PC-3 (cell line): ENCODE measurements at regions of chr1 and their contacts with region 1.

Region 1: GRCh38 chr1:88061492-88062177 is 622.4 kb upstream of the PKN2 start:
- DNase-seq: peak; percentile 84
- ATAC-seq: peak; percentile 89
- H3K4me3 ChIP-seq: no peak overlapping the region
- H3K27ac ChIP-seq: no peak overlapping the region
- H3K4me1 ChIP-seq: peaks cover 27% of the 10 kb centered on the region
- H3K27me3 ChIP-seq: no peaks in the 10 kb centered on the region
- CTCF ChIP-seq: peak; percentile 95

Region 2: GRCh38 chr1:87508247-87508787 is 553.3 kb before region 1 on chr1:
- CTCF ChIA-PET with region 1: no interaction called
- POLR2A ChIA-PET with region 1: no interaction called
- intact Hi-C with region 1: loop called (anchors 5 kb)
- DNase-seq: no peak
- ATAC-seq: peak; percentile 57
- H3K4me3 ChIP-seq: no peak overlapping the region
- H3K27ac ChIP-seq: no peak overlapping the region
- H3K4me1 ChIP-seq: no peaks in the 10 kb centered on the region; the same call in 1 of the 2 replicates
- H3K27me3 ChIP-seq: no peaks in the 10 kb centered on the region
- CTCF ChIP-seq: no peak

Region 3: DNA sequence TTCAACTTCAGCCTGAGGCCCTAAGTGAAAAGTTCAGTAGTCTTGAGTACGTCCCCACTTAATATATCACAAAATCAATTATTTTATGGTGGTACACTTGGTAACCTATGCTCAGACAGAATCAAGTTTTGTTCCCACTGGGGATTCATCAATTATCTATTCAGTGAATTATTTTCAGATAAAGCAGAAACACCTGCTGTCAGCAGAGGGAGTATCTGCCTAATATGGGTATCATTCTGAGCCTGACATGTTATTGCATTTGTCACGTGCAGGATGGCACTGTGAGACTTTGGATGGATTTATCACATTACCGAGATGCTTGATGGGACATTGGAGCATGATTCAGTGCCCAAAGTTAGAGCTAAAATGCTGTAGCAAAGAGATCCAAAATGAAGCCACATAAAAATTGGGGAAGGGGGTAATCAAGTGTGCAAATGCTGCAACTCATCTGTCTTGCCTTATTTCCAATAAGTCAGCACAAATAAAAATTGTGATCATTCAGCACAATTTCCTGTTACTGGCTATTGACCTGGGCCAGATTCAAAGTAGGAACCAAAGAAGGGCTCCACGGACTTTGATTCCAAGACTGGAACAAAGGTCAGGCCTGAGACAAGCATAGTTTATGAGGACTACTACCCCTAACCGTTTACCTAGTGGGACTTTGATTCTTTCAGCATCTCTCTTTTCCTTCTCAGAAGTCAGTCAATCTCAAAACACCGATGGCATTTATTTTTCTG is 75.3 kb before region 1 on chr1:
- CTCF ChIA-PET with region 1: interaction called, 3 read pairs
- POLR2A ChIA-PET with region 1: no interaction called
- intact Hi-C with region 1: loop called (anchors 1 kb)
- DNase-seq: peak; percentile 39
- ATAC-seq: peak; percentile 53
- H3K4me3 ChIP-seq: no peak overlapping the region
- H3K27ac ChIP-seq: no peak overlapping the region
- H3K4me1 ChIP-seq: peaks cover 12% of the 10 kb centered on the region; the same call in 1 of the 2 replicates
- H3K27me3 ChIP-seq: no peaks in the 10 kb centered on the region
- CTCF ChIP-seq: peak; percentile 56

Region 4: GRCh38 chr1:88043834-88044233 is 17.8 kb before region 1 on chr1:
- CTCF ChIA-PET with region 1: no interaction called
- POLR2A ChIA-PET with region 1: no interaction called
- intact Hi-C with region 1: no loop called
- DNase-seq: no peak
- ATAC-seq: no peak
- H3K4me3 ChIP-seq: no peak overlapping the region
- H3K27ac ChIP-seq: no peak overlapping the region
- H3K4me1 ChIP-seq: no peaks in the 10 kb centered on the region
- H3K27me3 ChIP-seq: no peaks in the 10 kb centered on the region
- CTCF ChIP-seq: no peak

Region 5: GRCh38 chr1:88118176-88118845 is 56.7 kb after region 1 on chr1:
- CTCF ChIA-PET with region 1: no interaction called
- POLR2A ChIA-PET with region 1: no interaction called
- intact Hi-C with region 1: no loop called
- DNase-seq: no peak
- ATAC-seq: no peak
- H3K4me3 ChIP-seq: no peak overlapping the region
- H3K27ac ChIP-seq: no peak overlapping the region
- H3K4me1 ChIP-seq: no peaks in the 10 kb centered on the region
- H3K27me3 ChIP-seq: no peaks in the 10 kb centered on the region
- CTCF ChIP-seq: no peak

Region 6: DNA sequence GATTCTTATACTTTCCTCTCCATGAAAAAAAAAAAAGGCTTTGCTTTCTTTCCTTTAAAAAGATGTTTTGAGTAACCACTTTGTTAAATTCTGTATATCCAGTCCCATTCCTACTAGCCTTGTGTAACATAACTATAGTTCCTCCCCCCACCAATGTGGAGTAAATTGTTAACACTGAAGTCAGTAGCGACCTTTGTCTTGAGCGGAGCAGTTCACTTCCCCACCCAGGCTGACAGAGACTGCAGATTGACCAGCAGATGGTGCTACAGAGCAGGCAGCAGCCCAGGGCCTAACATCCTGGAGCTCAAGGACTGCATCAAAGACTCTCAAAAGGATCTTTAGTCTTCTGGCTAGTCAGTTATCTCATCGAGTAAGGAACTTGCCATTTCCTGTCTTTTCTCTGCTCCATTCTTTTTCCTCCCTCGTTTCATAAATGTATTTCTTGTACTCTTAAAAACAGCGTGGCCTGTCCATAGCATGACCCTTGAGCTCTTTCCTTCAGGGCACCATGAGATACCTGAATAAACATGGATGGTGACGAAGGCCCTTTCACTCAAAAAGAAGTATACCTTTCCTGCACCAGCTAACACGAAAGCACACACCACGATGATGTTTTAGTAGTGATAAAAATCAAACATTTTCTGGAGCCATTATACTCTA is 118.9 kb after region 1 on chr1:
- CTCF ChIA-PET with region 1: no interaction called
- POLR2A ChIA-PET with region 1: no interaction called
- intact Hi-C with region 1: loop called (anchors 5 kb)
- DNase-seq: peak; percentile 85
- ATAC-seq: peak; percentile 98
- H3K4me3 ChIP-seq: no peak overlapping the region
- H3K27ac ChIP-seq: no peak overlapping the region
- H3K4me1 ChIP-seq: peaks cover 6% of the 10 kb centered on the region
- H3K27me3 ChIP-seq: no peaks in the 10 kb centered on the region
- CTCF ChIP-seq: peak; percentile 96

Region 7: DNA sequence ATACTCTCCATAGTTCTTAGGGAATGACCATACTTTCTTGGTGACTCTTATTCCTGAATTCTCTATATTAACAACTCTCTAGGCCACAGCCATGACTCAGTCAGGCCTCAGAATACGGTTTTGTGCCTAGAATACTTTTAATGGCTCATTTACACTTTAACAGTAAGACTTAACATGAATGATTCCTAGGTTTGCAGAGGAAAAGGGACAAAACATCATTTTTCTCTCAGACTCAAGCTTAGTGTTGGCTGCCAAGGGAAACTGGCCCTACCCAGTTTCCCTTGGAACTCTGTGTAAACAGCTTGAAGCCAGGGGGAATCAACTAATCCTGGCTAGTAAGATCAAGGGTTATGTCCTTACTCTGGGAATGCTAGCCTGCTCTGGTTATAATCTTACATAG is 457.5 kb after region 1 on chr1:
- CTCF ChIA-PET with region 1: no interaction called
- POLR2A ChIA-PET with region 1: no interaction called
- intact Hi-C with region 1: no loop called
- DNase-seq: peak; percentile 7
- ATAC-seq: peak; percentile 66
- H3K4me3 ChIP-seq: no peak overlapping the region
- H3K27ac ChIP-seq: no peak overlapping the region
- H3K4me1 ChIP-seq: no peaks in the 10 kb centered on the region
- H3K27me3 ChIP-seq: 0 out of 2 replicates have a peak, but pooled peaks cover 2% of the 10 kb centered on the region
- CTCF ChIP-seq: no peak

Region 8: DNA sequence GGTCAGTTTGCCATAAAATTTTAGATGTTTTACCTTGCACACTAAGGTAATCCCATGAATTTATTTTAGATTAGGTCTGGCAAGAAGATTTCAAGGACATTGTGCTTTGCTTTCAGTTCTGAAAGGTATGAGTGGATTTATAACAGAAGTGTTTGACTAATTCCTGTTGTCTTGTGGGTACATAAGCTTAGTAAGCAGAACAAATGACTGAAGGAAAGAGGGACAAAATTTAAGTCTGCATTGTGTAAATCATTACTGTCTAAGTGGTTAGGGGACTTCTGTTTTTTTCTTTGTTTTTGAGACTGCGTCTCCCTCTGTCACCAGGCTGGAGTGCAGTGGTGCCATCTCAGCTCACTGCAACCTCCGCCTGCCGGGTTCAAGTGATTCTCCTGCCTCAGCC is 682.5 kb after region 1 on chr1:
- CTCF ChIA-PET with region 1: no interaction called
- POLR2A ChIA-PET with region 1: no interaction called
- intact Hi-C with region 1: no loop called
- DNase-seq: no peak
- ATAC-seq: no peak
- H3K4me3 ChIP-seq: no peak overlapping the region
- H3K27ac ChIP-seq: no peak overlapping the region
- H3K4me1 ChIP-seq: peaks cover 5% of the 10 kb centered on the region; the same call in 1 of the 2 replicates
- H3K27me3 ChIP-seq: no peaks in the 10 kb centered on the region
- CTCF ChIP-seq: no peak